GM10248 (cell line): ENCODE measurements at regions of chr10 and their contacts with region 1.

Region 1: DNA sequence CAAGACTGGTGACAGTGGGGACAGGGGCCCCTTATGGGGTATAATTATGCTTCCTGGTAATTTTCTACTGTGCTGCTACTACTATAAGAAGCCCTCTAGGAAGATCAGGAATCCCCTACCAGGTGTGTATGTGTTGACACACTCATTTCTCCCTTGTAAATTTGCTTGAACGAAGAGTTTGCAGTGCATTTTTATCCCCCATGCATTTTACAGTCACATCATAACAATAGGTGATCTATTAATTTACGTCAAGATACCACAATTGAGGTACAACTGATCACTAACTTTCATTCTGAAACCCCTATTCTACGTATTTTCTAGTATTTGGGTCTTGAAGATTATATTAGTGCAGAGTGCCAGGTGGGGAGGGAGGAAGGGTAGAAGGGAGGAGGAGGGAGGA is 252.2 kb downstream of the NSUN6 start:
- DNase-seq: peak; percentile 18
- CTCF ChIP-seq: no peak

Region 2: GRCh38 chr10:18381679-18382078 is 17.5 kb before region 1 on chr10:
- CTCF ChIA-PET with region 1: interaction called, 12 read pairs
- POLR2A ChIA-PET with region 1: no interaction called
- DNase-seq: no peak
- CTCF ChIP-seq: no peak

Region 3: GRCh38 chr10:18583575-18584270 is 184.6 kb after region 1 on chr10:
- CTCF ChIA-PET with region 1: no interaction called
- POLR2A ChIA-PET with region 1: no interaction called
- DNase-seq: no peak
- CTCF ChIP-seq: no peak